Activated CD4-positive, alpha-beta T cell treated with anti-CD3 and anti-CD28 coated beads, Interleukin-2, amount 10 ng/mL, durations not matched to agents 24 days and 14 days (primary cell): ENCODE measurements at regions of chr11 and their contacts with region 1.

Region 1: GRCh38 chr11:120108154-120108865 is 29.6 kb downstream of the TRIM29 start:
- DNase-seq: peak; percentile 88
- H3K4me3 Mint-ChIP-seq: no peak overlapping the region
- H3K27ac Mint-ChIP-seq: no peak overlapping the region
- H3K4me1 Mint-ChIP-seq: no peaks in the 10 kb centered on the region
- H3K27me3 Mint-ChIP-seq: no peaks in the 10 kb centered on the region

Region 2: DNA sequence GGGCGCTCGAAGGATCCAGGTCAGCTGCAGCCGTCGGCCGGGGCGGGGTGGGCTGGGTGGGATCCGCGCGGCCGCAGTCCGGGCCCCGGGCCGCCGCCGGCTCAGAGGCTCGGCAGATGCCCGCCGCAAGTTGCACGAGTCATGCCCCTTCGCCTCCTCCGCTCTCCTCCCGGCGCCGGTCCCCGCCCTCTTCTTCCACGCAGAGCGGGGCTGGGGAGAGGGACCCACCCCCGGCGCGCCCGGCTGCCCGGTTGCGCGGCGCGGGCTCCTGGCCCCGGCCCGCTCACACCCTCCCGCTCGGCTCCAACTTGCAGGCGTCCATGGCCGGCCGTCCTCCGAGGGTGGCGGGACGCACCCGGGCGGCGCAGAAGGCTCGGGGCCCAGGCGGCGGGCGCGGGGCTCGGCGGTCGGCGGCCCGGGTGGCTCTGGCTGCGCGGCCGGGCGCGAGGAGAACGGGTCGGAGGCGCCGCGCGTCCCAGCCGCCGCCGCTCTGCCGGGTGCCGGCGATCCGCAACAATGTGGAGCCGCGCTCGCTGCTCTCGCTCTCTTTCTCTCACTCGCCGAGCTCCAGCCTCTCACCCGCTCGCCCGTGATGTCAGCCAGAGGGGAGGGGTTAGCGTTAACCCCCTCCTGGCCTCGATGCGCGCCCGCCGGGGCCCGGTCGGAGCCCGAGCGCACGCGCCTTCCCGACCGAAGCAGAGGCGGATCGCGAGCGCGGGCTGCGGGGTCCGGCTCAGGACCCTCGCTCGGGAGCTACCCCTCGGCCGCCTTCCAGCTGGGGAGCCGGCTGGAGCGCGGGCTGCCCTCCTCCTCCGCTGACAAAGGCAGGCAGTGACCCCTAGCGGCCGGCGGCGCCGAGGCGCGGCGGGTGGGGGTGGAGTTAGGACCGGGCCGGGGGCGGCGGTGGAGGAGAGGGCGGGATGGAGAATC is 379.4 kb before region 1 on chr11 and contains the start of gene NECTIN1:
- intact Hi-C with region 1: loop called (anchors 1 kb)
- DNase-seq: peak; percentile 96
- H3K4me3 Mint-ChIP-seq: peak within 1 kb of the TSS; percentile 85
- H3K27ac Mint-ChIP-seq: peak within 1 kb of the TSS; percentile 58
- H3K4me1 Mint-ChIP-seq: peaks cover 15% of the 10 kb centered on the region
- H3K27me3 Mint-ChIP-seq: peaks cover 73% of the 10 kb centered on the region
- total RNA-seq, gene NECTIN1: 3.1 and 5.7 TPM in 2 replicates